ENCODE measurements at regions of chr6 and their contacts with region 1.

Region 1: GRCh38 chr6:99467509-99468106 is 42.5 kb upstream of the PNISR start:
- DNase-seq: peak in 2 of 9 experiments; percentile 44 to 58
- ATAC-seq: no peak
- H3K4me3 ChIP-seq: no peak overlapping the region
- H3K4me3 Mint-ChIP-seq: no peak overlapping the region
- H3K27ac ChIP-seq: no peak overlapping the region
- H3K27ac Mint-ChIP-seq: no peak overlapping the region
- H3K4me1 ChIP-seq: no peaks in the 10 kb centered on the region
- H3K4me1 Mint-ChIP-seq: no peaks in the 10 kb centered on the region
- H3K27me3 ChIP-seq: no peaks in the 10 kb centered on the region
- H3K27me3 Mint-ChIP-seq: no peaks in the 10 kb centered on the region
- CTCF ChIP-seq: peak; percentile 97

Region 2: DNA sequence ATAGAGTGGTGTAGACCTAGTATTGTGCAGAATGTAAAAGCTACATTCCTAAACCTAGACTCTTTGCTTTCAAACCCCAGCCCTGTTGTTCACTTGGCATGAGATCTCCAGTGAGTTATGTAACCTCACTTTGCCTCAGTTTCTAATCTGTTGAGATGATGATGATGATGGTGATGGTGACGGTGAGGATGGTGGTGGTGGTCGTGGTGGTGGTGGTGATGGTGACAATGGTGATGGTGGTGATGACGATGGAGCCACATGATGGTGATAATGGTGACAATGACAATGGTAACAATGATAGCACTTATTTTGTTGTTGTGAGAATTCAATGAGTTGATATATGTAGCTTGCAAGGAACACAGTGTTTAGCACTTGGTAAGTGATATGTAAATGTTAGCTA is 198.4 kb before region 1 on chr6:
- CTCF ChIA-PET with region 1: no interaction called
- POLR2A ChIA-PET with region 1: no interaction called
- intact Hi-C with region 1: no loop called
- DNase-seq: no peak
- ATAC-seq: no peak
- H3K4me3 ChIP-seq: no peak overlapping the region
- H3K4me3 Mint-ChIP-seq: no peak overlapping the region
- H3K27ac ChIP-seq: no peak overlapping the region
- H3K27ac Mint-ChIP-seq: no peak overlapping the region
- H3K4me1 ChIP-seq: no peaks in the 10 kb centered on the region
- H3K4me1 Mint-ChIP-seq: no peaks in the 10 kb centered on the region
- H3K27me3 ChIP-seq: peaks cover 0 to 5% of the 10 kb centered on the region in 2 experiments
- H3K27me3 Mint-ChIP-seq: peaks cover 4% of the 10 kb centered on the region
- CTCF ChIP-seq: no peak

Region 3: DNA sequence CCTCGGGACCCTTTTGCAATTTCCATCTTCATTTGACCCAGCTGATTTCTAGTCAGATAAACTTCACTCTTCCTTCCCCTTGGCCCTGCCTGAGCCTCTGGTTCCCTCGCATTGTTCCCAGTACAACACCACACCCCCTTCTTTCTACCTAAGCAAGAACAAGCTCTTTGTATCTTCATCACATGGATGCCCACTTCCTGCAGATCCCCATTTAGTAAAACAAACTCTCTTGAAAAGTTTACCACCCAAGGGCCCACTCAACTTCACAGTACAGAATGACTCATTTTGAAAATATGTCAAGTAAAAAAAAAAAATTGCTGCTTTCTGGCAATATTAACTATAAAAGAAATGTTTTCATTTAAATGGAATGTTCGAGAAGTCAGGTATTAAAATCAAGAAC is 123.3 kb before region 1 on chr6:
- CTCF ChIA-PET with region 1: no interaction called
- POLR2A ChIA-PET with region 1: no interaction called
- intact Hi-C with region 1: no loop called
- DNase-seq: no peak
- ATAC-seq: no peak
- H3K4me3 ChIP-seq: no peak overlapping the region
- H3K4me3 Mint-ChIP-seq: no peak overlapping the region
- H3K27ac ChIP-seq: no peak overlapping the region
- H3K27ac Mint-ChIP-seq: no peak overlapping the region
- H3K4me1 ChIP-seq: no peaks in the 10 kb centered on the region
- H3K4me1 Mint-ChIP-seq: peaks cover 2% of the 10 kb centered on the region
- H3K27me3 ChIP-seq: peaks cover 0 to 5% of the 10 kb centered on the region in 2 experiments
- H3K27me3 Mint-ChIP-seq: peaks cover 29% of the 10 kb centered on the region
- CTCF ChIP-seq: no peak

Region 4: GRCh38 chr6:99746261-99746895 is 278.8 kb after region 1 on chr6:
- CTCF ChIA-PET with region 1: interaction called, 45 read pairs
- POLR2A ChIA-PET with region 1: no interaction called
- intact Hi-C with region 1: loop called (anchors 1 kb)
- DNase-seq: peak; percentile 19 to 77 (median 49)
- ATAC-seq: peak; percentile 82
- H3K4me3 ChIP-seq: no peak overlapping the region
- H3K4me3 Mint-ChIP-seq: no peak overlapping the region
- H3K27ac ChIP-seq: no peak overlapping the region
- H3K27ac Mint-ChIP-seq: no peak overlapping the region
- H3K4me1 ChIP-seq: no peaks in the 10 kb centered on the region
- H3K4me1 Mint-ChIP-seq: no peaks in the 10 kb centered on the region
- H3K27me3 ChIP-seq: peaks cover 0 to 4% of the 10 kb centered on the region in 2 experiments
- H3K27me3 Mint-ChIP-seq: peaks cover 27% of the 10 kb centered on the region
- CTCF ChIP-seq: peak; percentile 85

Region 5: GRCh38 chr6:99905209-99906106 is 437.9 kb after region 1 on chr6:
- CTCF ChIA-PET with region 1: interaction called, 3 read pairs
- POLR2A ChIA-PET with region 1: no interaction called
- intact Hi-C with region 1: loop called (anchors 10 kb)
- DNase-seq: peak in 2 of 9 experiments; percentile 39 to 44
- ATAC-seq: no peak
- H3K4me3 ChIP-seq: no peak overlapping the region
- H3K4me3 Mint-ChIP-seq: no peak overlapping the region
- H3K27ac ChIP-seq: no peak overlapping the region
- H3K27ac Mint-ChIP-seq: no peak overlapping the region
- H3K4me1 ChIP-seq: no peaks in the 10 kb centered on the region
- H3K4me1 Mint-ChIP-seq: no peaks in the 10 kb centered on the region
- H3K27me3 ChIP-seq: peaks cover 0 to 3% of the 10 kb centered on the region in 2 experiments
- H3K27me3 Mint-ChIP-seq: peaks cover 6% of the 10 kb centered on the region
- CTCF ChIP-seq: peak; percentile 37

Region 6: GRCh38 chr6:100479179-100480035 is 1011.8 kb after region 1 on chr6:
- CTCF ChIA-PET with region 1: no interaction called
- POLR2A ChIA-PET with region 1: no interaction called
- intact Hi-C with region 1: loop called in 1 of 2 experiments (anchors 10 kb)
- DNase-seq: peak in 2 of 9 experiments; percentile 30 to 48
- ATAC-seq: no peak
- H3K4me3 ChIP-seq: no peak overlapping the region
- H3K4me3 Mint-ChIP-seq: no peak overlapping the region
- H3K27ac ChIP-seq: no peak overlapping the region
- H3K27ac Mint-ChIP-seq: no peak overlapping the region
- H3K4me1 ChIP-seq: no peaks in the 10 kb centered on the region
- H3K4me1 Mint-ChIP-seq: no peaks in the 10 kb centered on the region
- H3K27me3 ChIP-seq: no peaks in the 10 kb centered on the region
- H3K27me3 Mint-ChIP-seq: peaks cover 19% of the 10 kb centered on the region
- CTCF ChIP-seq: peak; percentile 51

Measured in CD8-positive, alpha-beta T cell (primary cell).